HCT116 (cell line): ENCODE measurements at regions of chr3 and their contacts with region 1.

Region 1: GRCh38 chr3:53350652-53351051 is 3.3 kb upstream of the DCP1A start:
- DNase-seq: peak; percentile 18
- ATAC-seq: no peak
- H3K4me3 ChIP-seq: no peak overlapping the region
- H3K27ac ChIP-seq: no peak overlapping the region
- H3K4me1 ChIP-seq: peaks cover 6 to 30% of the 10 kb centered on the region in 2 experiments
- H3K27me3 ChIP-seq: no peaks in the 10 kb centered on the region
- CTCF ChIP-seq: peak; percentile 54 to 63 (median 55); a peak in 5 of 6 replicates
- POLR2A ChIP-seq: no peak
- RAD21 ChIP-seq: peak; percentile 66

Region 2: GRCh38 chr3:53219895-53220483 is 130.7 kb before region 1 on chr3:
- CTCF ChIA-PET with region 1: no interaction called
- POLR2A ChIA-PET with region 1: no interaction called
- RAD21 ChIA-PET with region 1: no interaction called
- intact Hi-C with region 1: loop called (anchors 1 kb)
- DNase-seq: peak; percentile 57
- ATAC-seq: peak; percentile 89
- H3K4me3 ChIP-seq: no peak overlapping the region
- H3K27ac ChIP-seq: no peak overlapping the region
- H3K4me1 ChIP-seq: peaks cover 0 to 4% of the 10 kb centered on the region in 2 experiments; a peak in 1 of 4 replicates
- H3K27me3 ChIP-seq: no peaks in the 10 kb centered on the region
- CTCF ChIP-seq: peak; percentile 93 to 97 (median 94)
- POLR2A ChIP-seq: no peak
- RAD21 ChIP-seq: peak; percentile 90

Region 3: GRCh38 chr3:53457068-53457467 is 106.4 kb after region 1 on chr3:
- CTCF ChIA-PET with region 1: no interaction called
- POLR2A ChIA-PET with region 1: no interaction called
- RAD21 ChIA-PET with region 1: no interaction called
- intact Hi-C with region 1: no loop called
- DNase-seq: no peak
- ATAC-seq: no peak
- H3K4me3 ChIP-seq: no peak overlapping the region
- H3K27ac ChIP-seq: no peak overlapping the region
- H3K4me1 ChIP-seq: no peaks in the 10 kb centered on the region
- H3K27me3 ChIP-seq: peaks cover 36% of the 10 kb centered on the region
- CTCF ChIP-seq: no peak
- POLR2A ChIP-seq: no peak
- RAD21 ChIP-seq: no peak

Region 4: DNA sequence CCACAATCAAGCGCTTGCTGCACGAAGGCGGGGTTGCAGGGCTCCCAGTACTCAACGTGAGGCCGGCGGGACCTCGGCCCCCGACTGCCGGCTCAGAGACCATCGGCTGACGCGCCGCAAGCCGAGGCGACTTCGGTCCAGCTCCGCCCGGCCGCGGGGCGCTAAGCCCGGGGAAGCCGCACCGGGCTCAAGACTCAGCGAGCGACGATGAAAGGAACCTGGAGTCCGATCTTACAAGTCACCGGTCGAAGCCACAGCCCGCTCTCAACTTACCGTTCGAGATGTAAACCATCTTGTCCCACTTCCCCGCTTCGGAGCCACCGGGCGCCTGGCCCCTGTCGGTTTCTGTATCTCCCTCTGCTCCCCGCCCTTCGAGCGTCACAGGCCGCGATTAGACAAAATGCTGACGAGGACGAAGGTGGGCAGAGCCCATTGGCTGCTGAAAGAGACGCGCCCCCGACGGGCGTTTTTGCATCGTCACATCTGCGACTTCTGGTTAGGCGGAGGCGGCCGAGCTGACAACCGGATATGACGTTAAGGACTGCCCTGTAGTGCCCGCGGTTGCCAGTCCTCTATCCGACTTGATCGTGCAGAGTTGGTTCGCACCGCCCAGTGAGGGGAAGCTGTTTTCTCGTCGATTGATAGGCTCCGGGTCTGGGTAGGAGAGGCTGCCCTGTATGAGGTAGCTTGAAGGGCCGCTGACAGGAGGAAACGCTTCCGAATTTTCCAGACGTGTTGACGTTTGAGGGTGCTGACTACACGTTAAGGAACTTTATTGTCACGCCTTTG is 541.0 kb after region 1 on chr3 and contains the start of gene SELENOK:
- CTCF ChIA-PET with region 1: no interaction called
- POLR2A ChIA-PET with region 1: no interaction called
- RAD21 ChIA-PET with region 1: no interaction called
- intact Hi-C with region 1: loop called (anchors 10 kb)
- DNase-seq: peak; percentile 99
- ATAC-seq: peak; percentile 94
- H3K4me3 ChIP-seq: peak within 1 kb of the TSS; percentile 85 to 95
- H3K27ac ChIP-seq: peak within 1 kb of the TSS; percentile 58
- H3K4me1 ChIP-seq: peaks cover 10 to 20% of the 10 kb centered on the region in 2 experiments; a peak in 3 of 4 replicates
- H3K27me3 ChIP-seq: no peaks in the 10 kb centered on the region
- CTCF ChIP-seq: no peak
- POLR2A ChIP-seq: peak; percentile 85
- RAD21 ChIP-seq: no peak
- total RNA-seq, gene SELENOK: 35.1 TPM